Natural killer cell (primary cell): ENCODE measurements at regions of chr3 and their contacts with region 1.

Region 1: DNA sequence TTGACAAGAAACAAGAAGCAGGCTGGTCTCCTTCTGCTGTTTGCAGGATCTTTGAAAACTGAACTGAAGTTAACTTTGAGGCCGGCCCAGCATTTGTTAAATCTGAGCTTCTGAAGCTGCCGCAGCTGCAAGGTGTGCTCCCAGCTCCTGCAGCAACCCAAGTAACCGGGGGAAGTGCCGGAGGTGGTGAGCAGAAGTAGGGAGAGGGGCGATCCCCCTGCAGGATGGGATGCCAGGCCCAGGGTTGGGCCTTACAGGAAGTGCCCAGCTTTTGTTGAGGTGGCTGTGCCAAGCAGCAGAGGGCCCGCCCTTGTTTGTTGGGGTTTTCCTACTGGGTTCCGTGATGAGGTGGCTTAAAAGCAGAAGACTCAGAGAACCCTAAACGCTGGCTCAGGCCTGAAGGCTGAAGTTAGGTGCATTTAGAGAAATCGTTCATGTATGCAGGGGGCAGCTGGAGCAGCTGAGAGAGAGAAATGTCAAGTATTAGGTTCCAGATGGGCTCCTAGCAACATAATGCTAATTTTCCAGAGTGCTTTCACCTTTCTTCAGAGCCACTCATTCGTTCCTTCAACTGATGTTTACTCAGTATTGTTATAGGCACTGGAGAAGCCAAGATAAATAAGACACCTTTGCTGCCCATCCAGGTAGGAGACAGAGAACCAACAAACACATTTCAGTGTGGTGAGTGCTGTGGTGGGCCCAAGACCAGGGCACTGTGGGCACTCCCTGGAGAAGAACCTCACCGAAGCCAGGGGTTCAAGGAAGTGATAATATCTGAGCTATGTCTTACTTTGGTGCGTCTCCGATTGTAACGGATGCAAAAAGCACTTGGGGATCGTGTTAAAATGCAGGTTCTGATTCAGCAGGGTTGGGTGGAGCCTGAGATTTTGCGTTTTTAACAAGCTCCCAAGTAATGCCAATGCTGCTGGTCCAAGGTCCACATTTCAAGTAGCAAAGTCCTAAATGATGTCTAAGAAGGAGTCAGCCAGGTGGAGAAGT is 42.2 kb upstream of the PLCL2 start:
- DNase-seq: peak; percentile 68 to 90
- ATAC-seq: peak; percentile 84 to 90 (median 85)
- H3K4me3 ChIP-seq: peak overlapping the region; percentile 8
- H3K4me3 Mint-ChIP-seq: peak overlapping the region; percentile 93
- H3K27ac ChIP-seq: peak overlapping the region; percentile 83
- H3K27ac Mint-ChIP-seq: peak overlapping the region; percentile 98 to 99
- H3K4me1 ChIP-seq: peaks cover 52% of the 10 kb centered on the region
- H3K4me1 Mint-ChIP-seq: peaks cover 66 to 72% of the 10 kb centered on the region in 2 donors
- H3K27me3 ChIP-seq: no peaks in the 10 kb centered on the region
- H3K27me3 Mint-ChIP-seq: peaks cover 0 to 6% of the 10 kb centered on the region in 2 donors
- CTCF ChIP-seq: no peak

Region 2: DNA sequence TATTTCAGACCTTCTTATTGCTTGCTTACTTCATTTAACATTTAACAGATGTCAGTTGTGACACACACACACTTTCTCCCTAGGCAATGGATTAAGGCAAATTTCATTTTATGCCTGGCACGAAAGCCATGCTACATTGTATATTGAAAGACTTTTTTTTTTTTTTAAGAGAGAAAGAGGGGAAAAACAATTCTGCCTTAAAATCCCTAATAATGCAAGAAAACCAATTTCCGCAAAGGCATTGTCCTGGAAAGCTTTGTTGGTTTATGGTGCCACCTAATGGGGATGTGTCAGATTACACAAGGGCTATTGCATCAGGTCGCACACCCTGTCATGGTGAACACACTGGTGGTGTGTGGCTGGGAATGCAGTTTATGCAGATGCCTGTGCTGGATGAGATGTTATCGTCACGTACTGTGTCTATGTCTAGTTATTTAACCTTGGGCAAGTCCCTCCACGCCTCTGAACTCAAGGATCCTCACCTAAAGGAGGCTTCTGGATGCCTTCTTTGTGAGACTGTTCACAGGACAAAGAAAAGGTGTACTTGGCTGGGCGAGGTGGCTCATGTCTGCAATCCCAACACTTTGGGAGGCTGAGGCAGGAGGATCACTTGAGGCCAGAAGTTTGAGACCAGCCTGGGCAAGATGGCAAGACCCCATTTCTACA is 291.8 kb before region 1 on chr3:
- intact Hi-C with region 1: no loop called
- DNase-seq: peak; percentile 56 to 91
- ATAC-seq: peak; percentile 86 to 90 (median 88)
- H3K4me3 ChIP-seq: no peak overlapping the region
- H3K4me3 Mint-ChIP-seq: peak overlapping the region; percentile 40
- H3K27ac ChIP-seq: no peak overlapping the region
- H3K27ac Mint-ChIP-seq: peak overlapping the region; percentile 31 to 69
- H3K4me1 ChIP-seq: peaks cover 17% of the 10 kb centered on the region
- H3K4me1 Mint-ChIP-seq: peaks cover 34 to 40% of the 10 kb centered on the region in 2 donors
- H3K27me3 ChIP-seq: no peaks in the 10 kb centered on the region
- H3K27me3 Mint-ChIP-seq: peaks cover 0 to 9% of the 10 kb centered on the region in 2 donors
- CTCF ChIP-seq: peak; percentile 93

Region 3: DNA sequence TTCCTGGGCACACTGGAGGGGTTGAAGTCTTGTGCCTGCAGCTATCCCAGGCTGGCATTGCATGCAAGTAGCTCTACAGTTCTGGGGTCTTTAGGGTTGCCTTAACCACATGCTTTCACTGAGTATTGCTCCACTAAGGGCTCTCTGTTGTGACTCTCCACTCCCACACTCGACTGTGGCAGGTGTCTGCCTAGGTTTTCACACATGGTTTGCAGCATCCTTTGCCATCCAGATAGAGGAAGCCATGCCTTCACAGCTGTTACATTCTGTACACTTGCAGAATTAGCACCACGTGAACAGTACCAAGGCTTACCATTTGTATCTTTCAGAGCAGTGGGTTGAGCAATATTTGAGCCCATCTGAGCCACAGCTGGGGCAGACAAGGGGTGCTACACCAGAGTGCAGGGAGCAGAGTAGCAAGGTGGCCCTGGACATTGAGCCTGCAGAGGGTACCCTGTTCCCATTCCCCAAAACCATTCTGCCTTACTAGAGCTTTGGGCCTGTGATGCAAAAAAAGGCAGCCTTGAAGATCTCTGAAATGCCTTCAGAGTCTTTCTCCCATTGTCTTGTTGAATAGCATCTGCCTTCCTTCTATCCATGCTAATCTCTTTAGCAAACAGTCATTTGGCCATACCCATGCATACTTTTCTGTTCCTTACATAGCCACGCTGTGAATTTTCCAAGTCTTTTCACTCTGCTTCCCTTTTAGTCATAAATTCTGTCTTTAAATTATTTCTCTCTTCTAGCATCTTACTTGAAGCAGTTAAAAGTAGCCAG is 53.0 kb before region 1 on chr3:
- intact Hi-C with region 1: loop called (anchors 5 kb)
- DNase-seq: peak; percentile 48 to 59
- ATAC-seq: peak; percentile 95 to 100 (median 95)
- H3K4me3 ChIP-seq: no peak overlapping the region
- H3K4me3 Mint-ChIP-seq: peak overlapping the region; percentile 68
- H3K27ac ChIP-seq: no peak overlapping the region
- H3K27ac Mint-ChIP-seq: peak overlapping the region; percentile 25 to 55
- H3K4me1 ChIP-seq: peaks cover 26% of the 10 kb centered on the region
- H3K4me1 Mint-ChIP-seq: peaks cover 70 to 78% of the 10 kb centered on the region in 2 donors
- H3K27me3 ChIP-seq: no peaks in the 10 kb centered on the region
- H3K27me3 Mint-ChIP-seq: peaks cover 10 to 17% of the 10 kb centered on the region in 2 donors
- CTCF ChIP-seq: no peak

Region 4: GRCh38 chr3:16904423-16905417 is 62.1 kb after region 1 on chr3:
- intact Hi-C with region 1: loop called (anchors 5 kb)
- DNase-seq: peak in 1 of 2 donors; percentile 74
- ATAC-seq: peak; percentile 62 to 72 (median 71)
- H3K4me3 ChIP-seq: no peak overlapping the region
- H3K4me3 Mint-ChIP-seq: peak overlapping the region; percentile 83
- H3K27ac ChIP-seq: peak overlapping the region; percentile 51
- H3K27ac Mint-ChIP-seq: peak overlapping the region; percentile 82 to 94
- H3K4me1 ChIP-seq: peaks cover 58% of the 10 kb centered on the region
- H3K4me1 Mint-ChIP-seq: peaks cover 87 to 89% of the 10 kb centered on the region in 2 donors
- H3K27me3 ChIP-seq: no peaks in the 10 kb centered on the region
- H3K27me3 Mint-ChIP-seq: no peaks in the 10 kb centered on the region
- CTCF ChIP-seq: no peak

Region 5: GRCh38 chr3:17023006-17023664 is 180.6 kb after region 1 on chr3:
- intact Hi-C with region 1: loop called (anchors 2 kb)
- DNase-seq: peak; percentile 45 to 80
- ATAC-seq: peak; percentile 84 to 93 (median 92)
- H3K4me3 ChIP-seq: no peak overlapping the region
- H3K4me3 Mint-ChIP-seq: peak overlapping the region; percentile 52
- H3K27ac ChIP-seq: peak overlapping the region; percentile 42
- H3K27ac Mint-ChIP-seq: peak overlapping the region; percentile 86 to 99
- H3K4me1 ChIP-seq: peaks cover 24% of the 10 kb centered on the region
- H3K4me1 Mint-ChIP-seq: peaks cover 66 to 67% of the 10 kb centered on the region in 2 donors
- H3K27me3 ChIP-seq: no peaks in the 10 kb centered on the region
- H3K27me3 Mint-ChIP-seq: no peaks in the 10 kb centered on the region
- CTCF ChIP-seq: no peak

Region 6: GRCh38 chr3:17088602-17089313 is 246.2 kb after region 1 on chr3:
- intact Hi-C with region 1: loop called (anchors 5 kb)
- DNase-seq: peak; percentile 57 to 72
- ATAC-seq: peak; percentile 75 to 89 (median 77)
- H3K4me3 ChIP-seq: no peak overlapping the region
- H3K4me3 Mint-ChIP-seq: peak overlapping the region; percentile 87
- H3K27ac ChIP-seq: peak overlapping the region; percentile 4
- H3K27ac Mint-ChIP-seq: peak overlapping the region; percentile 65 to 80
- H3K4me1 ChIP-seq: peaks cover 25% of the 10 kb centered on the region
- H3K4me1 Mint-ChIP-seq: peaks cover 58 to 62% of the 10 kb centered on the region in 2 donors
- H3K27me3 ChIP-seq: no peaks in the 10 kb centered on the region
- H3K27me3 Mint-ChIP-seq: no peaks in the 10 kb centered on the region
- CTCF ChIP-seq: no peak